Caco-2 (cell line): ENCODE measurements at regions of chr1 and their contacts with region 1.

Region 1: GRCh38 chr1:245990315-245991022 is 516.6 kb downstream of the SMYD3 start:
- DNase-seq: no peak
- H3K4me3 ChIP-seq: no peak overlapping the region
- H3K4me3 Mint-ChIP-seq: no peak overlapping the region
- H3K27ac Mint-ChIP-seq: no peak overlapping the region
- H3K4me1 ChIP-seq: peaks cover 14% of the 10 kb centered on the region
- H3K4me1 Mint-ChIP-seq: no peaks in the 10 kb centered on the region
- H3K27me3 ChIP-seq: no peaks in the 10 kb centered on the region
- H3K27me3 Mint-ChIP-seq: no peaks in the 10 kb centered on the region
- CTCF ChIP-seq: no peak

Region 2: DNA sequence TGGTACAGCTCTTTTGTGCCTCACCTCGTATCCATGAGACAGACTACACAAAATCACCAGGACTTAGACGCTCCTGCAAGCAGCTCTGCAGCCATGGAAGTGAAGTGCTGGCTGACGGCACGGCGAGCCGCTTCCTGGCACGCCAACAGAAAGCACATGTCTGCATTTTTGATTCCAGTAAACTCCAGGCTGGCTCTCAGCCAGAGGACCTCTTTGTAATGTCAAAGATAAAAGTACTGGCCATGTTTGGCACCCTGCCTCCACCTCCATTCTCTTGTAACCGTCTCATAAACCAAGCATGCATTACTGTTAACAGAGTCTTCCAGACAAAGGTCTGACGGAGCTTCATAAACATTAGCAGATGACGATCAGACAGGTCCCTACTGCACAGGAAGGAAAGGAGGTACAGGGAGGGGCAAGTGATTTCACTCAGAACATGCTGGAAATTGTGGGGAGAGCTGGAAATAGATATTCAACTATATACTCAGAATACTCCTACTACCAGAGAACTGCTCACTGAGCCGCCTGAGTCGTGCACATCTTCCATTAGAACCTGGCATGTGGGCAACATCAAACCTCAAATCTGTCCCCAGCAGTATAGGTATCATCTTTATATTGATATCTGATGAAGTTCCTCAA is 115.4 kb before region 1 on chr1:
- CTCF ChIA-PET with region 1: no interaction called
- POLR2A ChIA-PET with region 1: no interaction called
- intact Hi-C with region 1: no loop called
- DNase-seq: no peak
- H3K4me3 ChIP-seq: no peak overlapping the region
- H3K4me3 Mint-ChIP-seq: no peak overlapping the region
- H3K27ac Mint-ChIP-seq: no peak overlapping the region
- H3K4me1 ChIP-seq: peaks cover 15% of the 10 kb centered on the region
- H3K4me1 Mint-ChIP-seq: peaks cover 4% of the 10 kb centered on the region
- H3K27me3 ChIP-seq: no peaks in the 10 kb centered on the region
- H3K27me3 Mint-ChIP-seq: no peaks in the 10 kb centered on the region
- CTCF ChIP-seq: no peak

Region 3: GRCh38 chr1:245969283-245969682 is 21.2 kb before region 1 on chr1:
- CTCF ChIA-PET with region 1: no interaction called
- POLR2A ChIA-PET with region 1: no interaction called
- intact Hi-C with region 1: loop called (anchors 1 kb)
- DNase-seq: peak; percentile 53 to 65
- H3K4me3 ChIP-seq: no peak overlapping the region
- H3K4me3 Mint-ChIP-seq: no peak overlapping the region
- H3K27ac Mint-ChIP-seq: no peak overlapping the region
- H3K4me1 ChIP-seq: peaks cover 16% of the 10 kb centered on the region
- H3K4me1 Mint-ChIP-seq: peaks cover 19% of the 10 kb centered on the region
- H3K27me3 ChIP-seq: no peaks in the 10 kb centered on the region
- H3K27me3 Mint-ChIP-seq: no peaks in the 10 kb centered on the region
- CTCF ChIP-seq: no peak